ENCODE measurements at regions of chr16 and their contacts with region 1.

Region 1: DNA sequence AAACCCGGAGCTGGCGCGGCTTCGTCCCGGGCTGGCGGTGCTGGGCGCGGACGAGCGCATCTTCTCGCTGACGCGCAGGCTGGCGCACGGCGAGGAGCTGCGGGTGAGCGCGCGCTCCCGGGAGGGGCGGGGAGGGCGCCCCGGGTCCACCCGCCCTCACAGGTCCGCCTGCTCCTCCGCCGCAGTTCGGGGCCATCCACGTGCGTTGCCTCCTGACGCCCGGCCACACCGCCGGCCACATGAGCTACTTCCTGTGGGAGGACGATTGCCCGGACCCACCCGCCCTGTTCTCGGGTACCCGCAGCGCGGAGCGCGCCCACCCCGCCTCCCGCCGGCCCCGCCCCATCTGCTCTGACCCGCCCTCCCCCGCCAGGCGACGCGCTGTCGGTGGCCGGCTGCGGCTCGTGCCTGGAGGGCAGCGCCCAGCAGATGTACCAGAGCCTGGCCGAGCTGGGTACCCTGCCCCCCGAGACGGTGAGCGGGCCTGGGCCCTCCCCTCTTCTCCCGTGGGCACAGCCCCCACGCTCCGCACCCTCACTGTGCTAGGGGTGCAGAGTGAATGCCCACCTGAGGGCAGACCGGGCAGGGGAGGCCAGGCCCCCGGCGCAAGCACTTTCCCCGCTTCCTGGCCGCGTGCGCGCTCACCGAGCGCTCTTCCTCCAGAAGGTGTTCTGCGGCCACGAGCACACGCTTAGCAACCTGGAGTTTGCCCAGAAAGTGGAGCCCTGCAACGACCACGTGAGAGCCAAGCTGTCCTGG is 1.4 kb downstream of the HAGHL start:
- DNase-seq: peak; percentile 79
- ATAC-seq: peak; percentile 71
- H3K4me3 Mint-ChIP-seq: no peak overlapping the region
- H3K27ac Mint-ChIP-seq: no peak overlapping the region
- H3K4me1 Mint-ChIP-seq: peaks cover 4% of the 10 kb centered on the region
- H3K27me3 Mint-ChIP-seq: no peaks in the 10 kb centered on the region

Region 2: DNA sequence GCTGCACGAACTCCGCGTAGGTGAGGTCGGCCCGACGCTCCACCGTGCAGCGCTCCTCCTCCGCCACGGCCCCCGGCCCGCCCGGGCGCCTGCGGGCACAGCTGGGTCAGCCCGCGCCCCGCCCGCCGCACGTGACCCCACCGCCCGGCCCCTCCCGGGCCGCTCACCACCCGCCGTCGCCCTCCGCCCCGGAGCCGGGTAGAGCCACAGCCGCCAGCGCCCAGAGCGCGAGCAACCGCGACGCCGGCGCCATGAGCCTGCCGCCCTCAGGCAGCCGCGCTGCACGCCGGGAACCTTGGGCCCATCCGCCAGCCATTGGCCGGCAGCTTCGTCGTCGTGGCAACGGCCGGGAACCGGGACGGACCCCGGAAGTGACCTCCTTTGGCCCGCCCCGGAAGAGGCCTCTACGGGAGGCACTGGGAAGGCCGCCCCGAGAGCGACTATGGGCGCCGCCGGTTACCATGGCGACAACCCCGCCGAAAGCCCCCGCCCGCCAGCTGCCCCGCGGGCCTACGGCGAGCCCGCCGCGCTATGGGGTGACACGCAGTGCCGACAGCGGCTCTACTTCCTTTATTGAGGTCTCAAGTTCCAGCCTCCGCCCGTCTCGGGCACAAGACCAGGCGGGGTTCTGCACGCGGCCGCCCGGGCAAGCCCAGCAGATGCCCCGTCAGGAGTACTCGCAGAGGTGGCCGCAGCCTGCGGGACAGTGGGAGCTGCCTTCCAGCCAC is 44.1 kb before region 1 on chr16 and contains the start of gene JMJD8:
- CTCF ChIA-PET with region 1: no interaction called
- DNase-seq: peak; percentile 98
- ATAC-seq: peak; percentile 73
- H3K4me3 Mint-ChIP-seq: peak within 1 kb of the TSS; percentile 66
- H3K27ac Mint-ChIP-seq: peak within 1 kb of the TSS; percentile 75
- H3K4me1 Mint-ChIP-seq: peaks cover 41% of the 10 kb centered on the region
- H3K27me3 Mint-ChIP-seq: no peaks in the 10 kb centered on the region
- total RNA-seq, gene JMJD8: 30.5 to 37.1 TPM

Region 3: GRCh38 chr16:788394-789126 is 60.2 kb after region 1 on chr16 and contains the start of gene CHTF18:
- CTCF ChIA-PET with region 1: interaction called, 18 read pairs
- DNase-seq: peak; percentile 94
- ATAC-seq: peak; percentile 95
- H3K4me3 Mint-ChIP-seq: peak within 1 kb of the TSS; percentile 84
- H3K27ac Mint-ChIP-seq: peak within 1 kb of the TSS; percentile 78
- H3K4me1 Mint-ChIP-seq: peaks cover 19% of the 10 kb centered on the region
- H3K27me3 Mint-ChIP-seq: no peaks in the 10 kb centered on the region
- total RNA-seq, gene CHTF18: 125 to 139 TPM